ENCODE measurements at regions of chrX and their contacts with region 1.

Region 1: DNA sequence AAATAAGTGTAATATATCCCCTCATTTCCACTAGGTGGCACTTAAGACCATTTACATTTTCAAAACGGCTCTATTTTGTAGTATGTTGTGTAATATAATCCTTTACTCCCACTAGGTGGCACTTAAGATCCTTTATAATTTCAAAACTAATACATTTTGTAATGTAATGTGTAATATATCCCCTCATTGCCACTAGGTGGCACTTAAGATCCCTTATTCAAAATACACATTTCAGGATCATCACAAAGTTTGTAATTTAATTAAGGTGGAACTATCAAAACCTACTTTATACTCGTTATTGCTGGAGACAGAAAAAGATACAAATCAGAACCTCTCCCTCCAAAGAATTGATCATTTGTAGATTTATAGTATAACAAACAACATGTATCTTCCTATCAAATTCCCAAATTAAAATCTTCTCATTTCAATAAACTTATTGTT is 132.5 kb downstream of the ARHGAP6 start:
- DNase-seq: peak; percentile 44
- H3K4me3 ChIP-seq: no peak overlapping the region
- H3K27me3 ChIP-seq: no peaks in the 10 kb centered on the region
- CTCF ChIP-seq: peak; percentile 41

Region 2: GRCh38 chrX:11143931-11144678 is 389.1 kb before region 1 on chrX:
- CTCF ChIA-PET with region 1: interaction called, 25 read pairs
- POLR2A ChIA-PET with region 1: no interaction called
- DNase-seq: no peak
- H3K4me3 ChIP-seq: no peak overlapping the region
- H3K27me3 ChIP-seq: no peaks in the 10 kb centered on the region
- CTCF ChIP-seq: peak; percentile 42

Region 3: DNA sequence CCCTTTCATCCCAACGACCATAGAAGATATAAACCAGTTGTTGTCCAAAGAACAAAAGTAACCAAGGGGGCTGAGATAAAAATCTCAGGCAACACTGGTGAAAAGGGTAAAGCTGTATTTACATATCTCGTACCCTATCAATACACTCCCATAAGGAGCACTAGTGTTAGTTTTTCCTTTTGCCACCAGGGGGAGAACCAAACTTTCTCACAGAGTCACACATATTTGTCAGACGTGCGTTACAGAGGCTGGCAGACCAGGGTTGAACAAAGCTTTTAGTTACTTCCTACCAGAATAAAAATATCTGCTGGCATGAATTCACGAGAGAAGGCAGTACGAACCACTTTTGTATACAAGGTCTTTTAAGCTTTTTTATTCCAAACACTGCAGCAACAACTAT is 151.8 kb before region 1 on chrX:
- CTCF ChIA-PET with region 1: interaction called, 16 read pairs
- POLR2A ChIA-PET with region 1: no interaction called
- DNase-seq: no peak
- H3K4me3 ChIP-seq: no peak overlapping the region
- H3K27me3 ChIP-seq: no peaks in the 10 kb centered on the region
- CTCF ChIP-seq: peak; percentile 56

Region 4: DNA sequence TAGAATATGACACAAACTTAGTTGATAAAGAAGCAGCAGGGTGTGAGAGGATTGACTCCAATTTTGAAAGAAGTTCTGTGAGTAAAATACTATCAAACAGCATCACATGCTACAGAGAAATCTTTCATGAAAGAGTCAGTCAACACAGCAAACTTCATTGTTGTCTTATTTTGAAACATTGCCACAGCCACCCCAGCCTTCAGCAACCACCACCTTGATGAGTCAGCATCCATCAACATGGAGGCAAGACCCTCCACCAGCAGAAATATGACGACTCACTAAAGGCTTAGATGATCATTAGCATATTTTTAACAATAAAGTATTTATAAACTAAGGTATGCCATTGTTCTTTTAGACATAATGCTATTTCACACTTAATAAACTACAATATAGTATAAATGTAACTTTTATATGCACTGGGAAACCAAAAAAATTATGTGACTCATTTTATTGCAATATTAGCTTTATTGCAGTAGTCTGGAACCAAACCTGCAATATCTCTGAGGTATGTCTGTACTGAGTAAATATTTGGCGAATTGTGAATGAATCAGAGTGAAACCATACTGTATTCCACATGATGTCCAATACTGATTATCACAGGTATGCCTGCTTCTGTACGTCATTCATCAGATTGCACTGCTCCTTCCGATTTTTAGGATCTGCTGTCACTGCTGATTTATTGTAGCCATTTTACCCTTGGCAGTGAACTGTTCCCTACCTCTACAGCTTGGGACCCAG is 616.6 kb after region 1 on chrX:
- CTCF ChIA-PET with region 1: no interaction called
- POLR2A ChIA-PET with region 1: no interaction called
- DNase-seq: no peak
- H3K4me3 ChIP-seq: no peak overlapping the region
- H3K27me3 ChIP-seq: no peaks in the 10 kb centered on the region
- CTCF ChIP-seq: no peak